WTC11 (cell line): ENCODE measurements at regions of chr9 and their contacts with region 1.

Region 1: DNA sequence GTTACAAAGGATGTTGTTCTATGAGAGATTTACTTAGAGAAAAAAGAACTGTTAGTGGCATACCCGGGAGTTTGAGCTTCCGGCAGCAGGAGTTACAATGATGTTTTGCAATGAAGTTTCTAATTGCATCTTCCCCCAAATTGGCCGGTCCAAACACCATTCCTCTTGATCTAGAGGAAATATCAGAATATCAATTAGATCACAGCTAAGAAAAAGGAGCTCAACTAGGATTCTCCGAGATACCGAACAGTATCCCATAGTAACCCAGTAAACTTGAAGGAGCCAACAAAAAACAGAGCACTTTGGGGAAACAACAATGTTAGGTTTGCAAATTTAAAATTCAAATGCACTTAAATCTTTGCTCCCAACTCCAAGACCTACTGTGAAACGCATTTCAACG is 159.5 kb downstream of the TRPM6 start:
- DNase-seq: no peak
- ATAC-seq: peak; percentile 25
- H3K4me3 Mint-ChIP-seq: no peak overlapping the region
- H3K27ac Mint-ChIP-seq: no peak overlapping the region; the same call in 1 of the 2 replicates
- H3K4me1 Mint-ChIP-seq: peaks cover 29% of the 10 kb centered on the region
- H3K27me3 Mint-ChIP-seq: no peaks in the 10 kb centered on the region
- CTCF ChIP-seq: no peak

Region 2: GRCh38 chr9:74742792-74743730 is 14.9 kb after region 1 on chr9:
- CTCF ChIA-PET with region 1: interaction called, 12 read pairs
- POLR2A ChIA-PET with region 1: no interaction called
- DNase-seq: peak; percentile 43
- ATAC-seq: peak; percentile 63
- H3K4me3 Mint-ChIP-seq: no peak overlapping the region
- H3K27ac Mint-ChIP-seq: no peak overlapping the region
- H3K4me1 Mint-ChIP-seq: peaks cover 10% of the 10 kb centered on the region
- H3K27me3 Mint-ChIP-seq: no peaks in the 10 kb centered on the region; the same call in 1 of the 2 replicates
- CTCF ChIP-seq: peak; percentile 57